ENCODE measurements at regions of chr1 and their contacts with region 1.

Region 1: DNA sequence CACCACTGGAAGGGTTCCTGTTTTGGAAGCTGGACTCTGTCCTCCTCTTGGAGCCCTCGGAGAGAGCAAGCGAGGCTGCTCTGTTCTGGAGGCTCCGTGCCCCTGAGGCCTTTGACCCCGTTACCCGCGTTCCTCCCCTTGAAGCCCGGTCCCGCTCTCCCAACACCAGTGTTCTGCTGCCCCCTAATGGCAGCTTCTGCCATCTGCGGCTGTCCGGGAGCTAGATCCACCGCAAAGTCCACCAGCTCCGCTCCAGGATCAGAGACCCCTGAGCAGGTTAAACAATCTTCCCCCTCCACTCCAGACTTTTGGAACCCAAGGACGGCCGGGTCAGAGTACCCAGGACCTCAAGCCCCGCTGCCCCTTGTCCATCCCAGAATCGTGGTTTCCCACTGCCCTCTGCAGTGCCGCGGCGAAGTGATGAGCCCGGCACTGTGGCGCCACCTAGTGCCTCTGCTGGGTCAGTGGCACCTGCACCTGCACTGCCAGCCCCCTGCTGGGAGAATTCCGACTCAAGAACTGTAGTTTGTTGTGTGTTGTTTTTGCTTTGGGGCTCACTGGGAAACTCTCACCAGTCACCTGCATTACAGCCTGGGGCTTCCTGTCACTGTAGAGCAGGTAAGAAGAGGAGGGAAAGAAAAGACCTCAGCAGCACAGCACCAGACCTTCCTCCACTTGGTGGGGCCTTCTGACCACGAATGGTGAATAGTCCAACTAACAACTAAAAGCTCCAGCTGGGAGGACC is 63.5 kb upstream of the NFASC start:
- DNase-seq: peak; percentile 90
- H3K4me3 ChIP-seq: peak overlapping the region; percentile 85
- H3K27ac ChIP-seq: no peak overlapping the region
- H3K4me1 ChIP-seq: no peaks in the 10 kb centered on the region
- H3K27me3 ChIP-seq: peaks cover 12% of the 10 kb centered on the region

Region 2: GRCh38 chr1:204578867-204579664 is 228.0 kb before region 1 on chr1:
- in situ Hi-C with region 1: loop called (anchors 5 kb)
- DNase-seq: peak; percentile 24
- H3K4me3 ChIP-seq: no peak overlapping the region
- H3K27ac ChIP-seq: no peak overlapping the region
- H3K4me1 ChIP-seq: no peaks in the 10 kb centered on the region
- H3K27me3 ChIP-seq: no peaks in the 10 kb centered on the region

Region 3: GRCh38 chr1:204941421-204942338 is 134.6 kb after region 1 on chr1:
- in situ Hi-C with region 1: loop called (anchors 5 kb)
- DNase-seq: peak; percentile 78
- H3K4me3 ChIP-seq: no peak overlapping the region
- H3K27ac ChIP-seq: no peak overlapping the region
- H3K4me1 ChIP-seq: peaks cover 12% of the 10 kb centered on the region; the same call in 1 of the 2 replicates
- H3K27me3 ChIP-seq: no peaks in the 10 kb centered on the region